CD14-positive monocyte (primary cell): ENCODE measurements at regions of chr19 and their contacts with region 1.

Region 1: DNA sequence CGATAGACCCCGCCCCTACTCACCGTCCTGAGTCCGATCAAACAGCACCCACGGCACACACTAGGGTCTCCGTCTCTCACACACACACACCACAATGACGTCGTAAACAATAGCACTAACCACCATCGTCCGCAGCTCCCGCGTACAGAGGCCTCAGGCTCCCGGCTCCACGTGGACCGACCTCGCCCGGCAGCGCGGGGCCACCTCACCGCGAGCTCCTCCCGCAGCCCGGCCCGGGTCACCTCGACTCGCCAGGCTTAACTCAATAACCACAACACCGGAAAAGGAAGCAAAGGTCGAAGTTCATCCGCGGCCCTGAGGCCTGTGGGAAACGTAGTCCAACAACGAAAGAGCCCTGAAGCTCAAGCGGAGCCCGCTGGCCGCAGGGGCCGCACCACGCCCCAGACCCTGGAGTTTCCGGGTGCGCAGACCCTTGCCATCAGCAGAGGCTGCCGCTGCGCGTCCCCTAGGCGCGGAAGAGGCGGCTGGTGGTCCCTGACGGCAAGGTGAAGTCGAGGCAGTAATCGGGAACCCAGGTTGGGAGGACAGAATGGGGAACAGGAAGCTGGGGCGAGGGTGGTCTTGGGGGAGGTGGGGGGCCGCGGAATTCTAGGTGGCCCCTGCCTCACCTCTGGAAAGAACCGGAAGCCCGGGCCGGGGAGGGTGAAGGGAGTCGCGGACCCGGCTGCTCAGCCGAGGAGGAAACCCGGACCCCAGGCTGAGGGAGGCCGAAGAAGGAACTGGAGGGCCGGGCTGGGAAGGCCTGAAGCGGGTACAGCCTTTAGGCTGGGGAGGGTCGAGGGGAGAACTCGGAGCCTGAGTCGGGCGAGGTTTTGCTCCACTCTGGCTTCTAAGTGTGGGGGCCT is at the start of gene ZNF529:
- DNase-seq: peak; percentile 84 to 88 (median 86)
- H3K4me3 ChIP-seq: peak within 1 kb of the TSS; percentile 65 to 92 (median 76)
- H3K4me3 Mint-ChIP-seq: peak within 1 kb of the TSS; percentile 93 to 98
- H3K27ac ChIP-seq: peak within 1 kb of the TSS; percentile 45 to 92
- H3K27ac Mint-ChIP-seq: peak within 1 kb of the TSS; percentile 84 to 96 (median 94)
- H3K4me1 ChIP-seq: peaks cover 17 to 21% of the 10 kb centered on the region in 2 donors
- H3K4me1 Mint-ChIP-seq: peaks cover 22% of the 10 kb centered on the region
- H3K27me3 ChIP-seq: no peaks in the 10 kb centered on the region
- H3K27me3 Mint-ChIP-seq: peaks cover 0 to 3% (median 0%) of the 10 kb centered on the region in 3 donors
- CTCF ChIP-seq: no peak
- polyA plus RNA-seq, gene ZNF529: 1.1 to 2.7 (median 1.3) TPM

Region 2: DNA sequence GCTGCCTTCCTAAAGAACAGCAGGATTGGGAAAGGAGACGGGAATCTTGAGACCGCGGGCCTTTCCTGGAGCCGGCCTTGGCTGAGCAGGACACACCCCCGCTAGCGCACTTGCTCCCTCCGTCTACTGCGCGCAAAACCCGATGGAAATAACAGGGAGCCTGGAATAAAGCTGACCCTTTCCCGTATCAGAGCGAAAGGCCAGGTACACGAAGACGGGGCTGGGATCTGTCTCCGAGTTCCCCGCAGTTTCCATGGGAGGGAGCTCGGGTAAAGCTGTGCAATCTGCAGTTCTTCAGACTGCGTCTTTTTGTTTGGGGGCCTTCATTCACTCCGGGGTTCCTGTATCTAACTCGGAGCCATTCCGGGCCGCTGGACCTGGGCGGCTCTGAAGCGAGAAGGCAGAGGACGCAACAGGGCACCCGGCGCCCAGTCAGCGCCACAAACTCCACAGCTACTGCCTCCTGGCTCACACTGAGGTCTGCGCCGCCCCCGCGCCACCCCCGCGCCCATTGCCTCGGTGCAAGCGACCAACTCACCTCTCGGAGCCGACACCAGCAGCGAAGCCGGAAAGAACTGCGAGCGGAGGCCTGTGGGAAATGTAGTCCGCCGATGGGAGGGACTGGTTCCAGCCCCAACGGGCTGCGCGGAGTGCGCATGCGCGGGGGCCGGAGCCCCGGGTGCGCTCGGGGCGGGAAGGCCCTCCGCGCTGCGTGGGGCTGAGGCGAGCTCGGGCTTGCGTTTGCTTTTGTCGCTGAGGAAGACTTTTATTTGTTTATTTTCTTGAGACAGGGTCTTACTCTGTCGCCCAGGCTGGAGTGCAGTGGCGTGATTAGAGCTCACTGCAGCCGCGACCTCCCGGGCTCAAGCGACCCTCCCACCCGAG is 194.4 kb before region 1 on chr19 and contains the start of gene ZFP14:
- intact Hi-C with region 1: loop called in 1 of 2 experiments (anchors 10 kb)
- DNase-seq: peak; percentile 82 to 91 (median 86)
- H3K4me3 ChIP-seq: peak within 1 kb of the TSS; percentile 65 to 90 (median 81)
- H3K4me3 Mint-ChIP-seq: peak within 1 kb of the TSS; percentile 92 to 95
- H3K27ac ChIP-seq: peak within 1 kb of the TSS; percentile 54 to 78
- H3K27ac Mint-ChIP-seq: peak within 1 kb of the TSS; percentile 78 to 94 (median 83)
- H3K4me1 ChIP-seq: peaks cover 13 to 17% of the 10 kb centered on the region in 2 donors
- H3K4me1 Mint-ChIP-seq: peaks cover 15% of the 10 kb centered on the region
- H3K27me3 ChIP-seq: no peaks in the 10 kb centered on the region
- H3K27me3 Mint-ChIP-seq: peaks cover 2 to 4% (median 3%) of the 10 kb centered on the region in 3 donors
- CTCF ChIP-seq: no peak
- polyA plus RNA-seq, gene ZFP14: 0.72 to 1.9 (median 1.1) TPM

Region 3: GRCh38 chr19:36436531-36436930 is 136.7 kb before region 1 on chr19:
- intact Hi-C with region 1: no loop called
- DNase-seq: no peak
- H3K4me3 ChIP-seq: no peak overlapping the region
- H3K4me3 Mint-ChIP-seq: no peak overlapping the region
- H3K27ac ChIP-seq: no peak overlapping the region
- H3K27ac Mint-ChIP-seq: no peak overlapping the region
- H3K4me1 ChIP-seq: no peaks in the 10 kb centered on the region
- H3K4me1 Mint-ChIP-seq: no peaks in the 10 kb centered on the region
- H3K27me3 ChIP-seq: no peaks in the 10 kb centered on the region
- H3K27me3 Mint-ChIP-seq: peaks cover 0 to 3% (median 3%) of the 10 kb centered on the region in 3 donors
- CTCF ChIP-seq: no peak

Region 4: GRCh38 chr19:36547001-36547732 is 26.1 kb before region 1 on chr19:
- intact Hi-C with region 1: no loop called
- DNase-seq: no peak
- H3K4me3 ChIP-seq: peak overlapping the region in 1 of 3 experiments; percentile 44
- H3K4me3 Mint-ChIP-seq: no peak overlapping the region
- H3K27ac ChIP-seq: no peak overlapping the region
- H3K27ac Mint-ChIP-seq: no peak overlapping the region
- H3K4me1 ChIP-seq: no peaks in the 10 kb centered on the region
- H3K4me1 Mint-ChIP-seq: no peaks in the 10 kb centered on the region
- H3K27me3 ChIP-seq: no peaks in the 10 kb centered on the region
- H3K27me3 Mint-ChIP-seq: no peaks in the 10 kb centered on the region
- CTCF ChIP-seq: no peak

Region 5: DNA sequence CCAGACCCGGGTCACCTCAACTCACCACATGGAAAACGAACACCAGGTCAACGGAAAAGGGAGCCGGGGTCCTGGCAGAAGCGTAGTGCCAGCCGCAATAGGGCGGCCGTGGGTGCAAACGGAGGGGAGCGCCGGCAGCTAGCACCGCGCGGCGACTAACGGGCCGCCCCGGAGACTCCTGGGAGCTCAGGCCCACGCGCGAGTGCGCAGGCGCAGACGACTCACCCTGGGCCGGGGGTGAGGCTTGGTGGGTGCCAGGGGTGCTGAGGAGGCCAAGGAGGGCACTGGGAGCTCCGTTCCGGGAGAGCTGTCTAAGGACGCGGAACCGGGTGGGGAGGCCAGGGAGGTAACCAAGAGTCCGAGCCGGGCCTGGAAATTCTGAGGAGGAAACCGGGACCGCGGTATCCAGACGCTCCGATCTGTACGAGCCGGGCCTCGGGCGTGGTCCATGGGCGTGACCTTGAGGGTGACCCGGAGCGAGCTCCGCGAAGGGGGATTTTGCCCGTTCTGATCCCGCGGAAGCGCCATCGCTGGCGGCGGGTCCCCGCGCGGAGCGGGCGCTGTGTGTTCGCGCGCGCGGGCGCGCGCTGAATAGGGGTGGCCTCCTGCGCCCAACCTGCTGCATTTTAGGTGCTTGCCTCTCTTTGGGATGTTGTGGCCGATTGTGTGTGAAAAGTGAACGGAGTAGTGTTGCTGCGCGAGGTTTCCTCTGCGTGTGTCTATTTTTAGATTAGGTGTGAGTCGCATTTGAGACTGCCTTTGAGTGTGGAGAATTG is 32.0 kb after region 1 on chr19 and contains the start of gene ZNF382:
- intact Hi-C with region 1: loop called in 1 of 2 experiments (anchors 2 kb)
- DNase-seq: peak; percentile 20 to 41 (median 39)
- H3K4me3 ChIP-seq: peak within 1 kb of the TSS; percentile 63 to 87 (median 71)
- H3K4me3 Mint-ChIP-seq: peak within 1 kb of the TSS; percentile 95 to 98
- H3K27ac ChIP-seq: peak within 1 kb of the TSS; percentile 56 to 72
- H3K27ac Mint-ChIP-seq: peak within 1 kb of the TSS; percentile 74 to 92 (median 82)
- H3K4me1 ChIP-seq: peaks cover 11 to 19% of the 10 kb centered on the region in 2 donors
- H3K4me1 Mint-ChIP-seq: peaks cover 18% of the 10 kb centered on the region
- H3K27me3 ChIP-seq: no peaks in the 10 kb centered on the region
- H3K27me3 Mint-ChIP-seq: peaks cover 0 to 2% (median 0%) of the 10 kb centered on the region in 3 donors
- CTCF ChIP-seq: no peak
- polyA plus RNA-seq, gene ZNF382: 0.37 to 0.63 TPM in 2 of 3 donors, not detected in the other

Region 6: DNA sequence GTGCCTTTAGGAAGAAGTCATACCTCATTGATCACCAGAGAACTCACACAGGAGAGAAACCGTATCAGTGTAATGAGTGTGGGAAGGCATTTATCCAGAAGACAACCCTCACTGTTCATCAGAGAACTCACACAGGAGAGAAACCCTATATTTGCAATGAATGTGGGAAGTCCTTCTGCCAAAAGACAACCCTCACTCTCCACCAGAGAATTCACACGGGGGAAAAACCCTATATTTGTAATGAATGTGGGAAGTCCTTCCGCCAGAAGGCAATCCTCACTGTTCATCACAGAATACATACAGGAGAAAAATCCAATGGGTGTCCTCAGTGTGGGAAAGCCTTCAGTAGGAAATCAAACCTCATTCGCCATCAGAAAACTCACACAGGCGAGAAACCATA is 53.8 kb after region 1 on chr19:
- intact Hi-C with region 1: no loop called
- DNase-seq: no peak
- H3K4me3 ChIP-seq: peak overlapping the region in 1 of 3 experiments; percentile 7
- H3K4me3 Mint-ChIP-seq: no peak overlapping the region
- H3K27ac ChIP-seq: no peak overlapping the region
- H3K27ac Mint-ChIP-seq: no peak overlapping the region
- H3K4me1 ChIP-seq: no peaks in the 10 kb centered on the region
- H3K4me1 Mint-ChIP-seq: no peaks in the 10 kb centered on the region
- H3K27me3 ChIP-seq: no peaks in the 10 kb centered on the region
- H3K27me3 Mint-ChIP-seq: peaks cover 0 to 2% (median 0%) of the 10 kb centered on the region in 3 donors
- CTCF ChIP-seq: no peak

Region 7: DNA sequence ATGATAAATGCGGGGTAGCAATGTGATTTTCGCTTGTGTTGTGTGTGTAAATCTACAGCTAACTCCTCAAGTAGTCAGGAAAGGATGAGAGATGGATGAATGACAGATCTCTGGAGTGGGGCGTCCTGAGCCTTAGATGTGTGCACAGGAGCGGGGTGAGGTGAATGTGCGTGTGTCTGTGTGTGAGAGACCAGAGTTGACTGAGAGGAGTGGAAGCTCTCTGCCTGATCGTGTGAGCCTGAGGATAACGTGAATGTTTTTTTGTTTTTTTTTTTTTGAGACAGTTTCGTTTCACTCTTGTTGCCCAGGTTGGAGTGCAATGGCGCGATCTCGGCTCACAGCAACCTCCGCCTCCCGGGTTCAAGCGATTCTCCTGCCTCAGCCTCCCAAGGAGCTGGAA is 92.6 kb after region 1 on chr19:
- intact Hi-C with region 1: loop called (anchors 5 kb)
- DNase-seq: no peak
- H3K4me3 ChIP-seq: peak overlapping the region; percentile 58 to 85 (median 79)
- H3K4me3 Mint-ChIP-seq: peak overlapping the region; percentile 97 to 100
- H3K27ac ChIP-seq: no peak overlapping the region
- H3K27ac Mint-ChIP-seq: peak overlapping the region in 1 of 7 donors; percentile 16
- H3K4me1 ChIP-seq: peaks cover 8 to 14% of the 10 kb centered on the region in 2 donors
- H3K4me1 Mint-ChIP-seq: peaks cover 13% of the 10 kb centered on the region
- H3K27me3 ChIP-seq: no peaks in the 10 kb centered on the region
- H3K27me3 Mint-ChIP-seq: peaks cover 2 to 5% (median 3%) of the 10 kb centered on the region in 3 donors
- CTCF ChIP-seq: no peak

Region 8: GRCh38 chr19:36894849-36895383 is 321.7 kb after region 1 on chr19:
- intact Hi-C with region 1: no loop called
- DNase-seq: no peak
- H3K4me3 ChIP-seq: no peak overlapping the region
- H3K4me3 Mint-ChIP-seq: no peak overlapping the region
- H3K27ac ChIP-seq: no peak overlapping the region
- H3K27ac Mint-ChIP-seq: no peak overlapping the region
- H3K4me1 ChIP-seq: no peaks in the 10 kb centered on the region
- H3K4me1 Mint-ChIP-seq: no peaks in the 10 kb centered on the region
- H3K27me3 ChIP-seq: no peaks in the 10 kb centered on the region
- H3K27me3 Mint-ChIP-seq: no peaks in the 10 kb centered on the region
- CTCF ChIP-seq: no peak